Activated CD4-positive, alpha-beta T cell treated with anti-CD3 and anti-CD28 coated beads for 36 hours (primary cell): ENCODE measurements at regions of chr15 and their contacts with region 1.

Region 1: GRCh38 chr15:59492389-59493377 is 54.7 kb downstream of the FAM81A start:
- DNase-seq: peak; percentile 65
- ATAC-seq: peak; percentile 74
- H3K4me3 Mint-ChIP-seq: no peak overlapping the region
- H3K27ac Mint-ChIP-seq: no peak overlapping the region
- H3K4me1 Mint-ChIP-seq: no peaks in the 10 kb centered on the region
- H3K27me3 Mint-ChIP-seq: peaks cover 4% of the 10 kb centered on the region

Region 2: DNA sequence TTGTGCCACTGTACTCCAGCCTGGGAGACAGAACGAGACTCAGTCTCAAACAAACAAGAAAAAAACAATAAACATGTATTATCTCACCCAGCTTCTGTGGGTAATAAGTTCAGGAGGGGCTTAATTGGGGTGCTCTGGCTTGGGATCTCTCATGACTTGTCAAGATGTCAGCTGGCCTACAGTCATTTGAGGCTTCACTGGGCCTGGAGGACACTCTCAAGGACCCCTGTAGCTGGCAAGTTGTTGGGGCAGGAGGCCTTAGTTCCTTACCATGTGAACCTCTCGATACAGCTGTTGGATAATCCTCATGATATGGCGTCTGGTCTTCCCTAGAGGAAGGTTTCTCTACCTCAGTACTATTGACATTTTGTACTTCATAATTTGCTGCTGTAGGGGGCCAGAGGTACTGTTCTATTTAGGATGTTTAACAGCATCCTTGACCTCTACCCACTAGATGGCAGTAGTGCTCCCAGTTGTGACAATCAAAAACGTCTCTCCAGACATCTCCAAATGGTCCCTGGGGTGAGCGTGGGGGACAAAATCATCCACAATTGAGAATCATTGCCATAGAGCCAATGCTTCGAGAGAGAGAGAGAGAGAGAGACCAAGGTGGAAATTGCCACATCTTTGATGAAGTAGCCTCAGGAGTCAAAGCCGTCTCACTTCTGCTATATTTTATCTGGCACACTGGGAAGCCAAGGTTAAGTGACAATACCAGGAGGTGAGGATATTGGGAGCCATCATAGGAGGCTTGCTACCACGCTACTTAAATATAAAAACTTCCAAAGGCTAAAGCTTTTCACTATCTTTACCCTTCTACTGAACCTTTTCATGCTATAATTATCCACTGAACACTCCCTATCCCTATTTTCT is 535.3 kb before region 1 on chr15:
- CTCF ChIA-PET with region 1: interaction called, 6 read pairs
- POLR2A ChIA-PET with region 1: no interaction called
- intact Hi-C with region 1: loop called (anchors 1 kb)
- DNase-seq: peak; percentile 73
- ATAC-seq: peak; percentile 84
- H3K4me3 Mint-ChIP-seq: no peak overlapping the region
- H3K27ac Mint-ChIP-seq: no peak overlapping the region
- H3K4me1 Mint-ChIP-seq: peaks cover 10% of the 10 kb centered on the region
- H3K27me3 Mint-ChIP-seq: no peaks in the 10 kb centered on the region

Region 3: DNA sequence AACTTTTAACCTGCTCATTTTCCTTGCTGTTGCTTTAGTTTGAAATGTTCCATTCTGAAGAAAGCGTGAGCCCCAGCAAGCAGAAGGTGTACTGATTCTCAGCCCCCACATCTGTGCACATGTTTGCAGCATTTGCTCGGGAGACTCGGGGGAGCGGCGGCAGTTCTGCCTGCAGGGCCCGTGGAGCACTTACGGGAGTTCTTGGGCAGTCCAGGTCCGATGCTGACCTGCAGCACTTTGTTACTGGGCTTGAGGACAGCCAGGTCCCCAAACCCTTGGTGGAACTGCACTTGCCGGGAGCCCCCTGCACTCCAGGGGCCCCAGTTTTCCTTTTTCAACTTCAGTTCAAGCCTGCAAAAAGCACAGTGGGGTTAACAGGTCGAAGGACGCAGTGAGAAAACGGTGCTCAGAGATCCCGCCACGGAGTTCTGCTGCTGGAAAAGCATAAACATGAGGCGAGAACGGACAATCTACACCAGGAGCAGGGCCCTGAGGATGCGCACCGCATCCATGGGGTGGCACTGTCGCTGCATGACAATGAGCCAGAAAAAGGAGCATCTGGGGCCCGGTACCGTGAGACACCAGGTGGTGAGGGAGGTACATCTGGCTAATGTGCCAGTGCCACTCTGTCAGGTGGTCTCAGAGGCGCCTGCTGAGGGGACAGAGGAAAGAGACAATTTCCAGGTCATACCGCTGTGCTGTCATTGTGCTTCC is 331.6 kb before region 1 on chr15:
- CTCF ChIA-PET with region 1: no interaction called
- POLR2A ChIA-PET with region 1: no interaction called
- intact Hi-C with region 1: loop called in 1 of 2 experiments (anchors 1 kb)
- DNase-seq: peak; percentile 55
- ATAC-seq: peak; percentile 39
- H3K4me3 Mint-ChIP-seq: no peak overlapping the region
- H3K27ac Mint-ChIP-seq: no peak overlapping the region
- H3K4me1 Mint-ChIP-seq: no peaks in the 10 kb centered on the region
- H3K27me3 Mint-ChIP-seq: no peaks in the 10 kb centered on the region

Region 4: GRCh38 chr15:59247364-59247763 is 245.3 kb before region 1 on chr15:
- CTCF ChIA-PET with region 1: interaction called, 44 read pairs
- POLR2A ChIA-PET with region 1: no interaction called
- intact Hi-C with region 1: loop called (anchors 1 to 2 kb)
- DNase-seq: peak; percentile 66
- ATAC-seq: peak; percentile 55
- H3K4me3 Mint-ChIP-seq: no peak overlapping the region
- H3K27ac Mint-ChIP-seq: no peak overlapping the region
- H3K4me1 Mint-ChIP-seq: peaks cover 3% of the 10 kb centered on the region
- H3K27me3 Mint-ChIP-seq: no peaks in the 10 kb centered on the region